CD8-positive, alpha-beta T cell (primary cell): ENCODE measurements at regions of chr15 and their contacts with region 1.

Region 1: GRCh38 chr15:33700695-33701304 is 267.5 kb upstream of the CHRM5 start:
- DNase-seq: peak; percentile 20 to 69 (median 53)
- ATAC-seq: peak; percentile 52
- H3K4me3 ChIP-seq: no peak overlapping the region
- H3K4me3 Mint-ChIP-seq: no peak overlapping the region
- H3K27ac ChIP-seq: no peak overlapping the region
- H3K27ac Mint-ChIP-seq: no peak overlapping the region
- H3K4me1 ChIP-seq: no peaks in the 10 kb centered on the region
- H3K4me1 Mint-ChIP-seq: no peaks in the 10 kb centered on the region
- H3K27me3 ChIP-seq: peaks cover 0 to 2% of the 10 kb centered on the region in 2 experiments
- H3K27me3 Mint-ChIP-seq: peaks cover 9% of the 10 kb centered on the region
- CTCF ChIP-seq: peak; percentile 81

Region 2: GRCh38 chr15:32657198-32657883 is 1043.5 kb before region 1 on chr15:
- CTCF ChIA-PET with region 1: interaction called, 11 read pairs
- POLR2A ChIA-PET with region 1: no interaction called
- intact Hi-C with region 1: loop called in 1 of 2 experiments (anchors 1 kb)
- DNase-seq: peak in 2 of 9 experiments; percentile 23 to 39
- ATAC-seq: peak; percentile 52
- H3K4me3 ChIP-seq: no peak overlapping the region
- H3K4me3 Mint-ChIP-seq: peak overlapping the region; percentile 17
- H3K27ac ChIP-seq: no peak overlapping the region
- H3K27ac Mint-ChIP-seq: no peak overlapping the region
- H3K4me1 ChIP-seq: no peaks in the 10 kb centered on the region
- H3K4me1 Mint-ChIP-seq: peaks cover 7% of the 10 kb centered on the region
- H3K27me3 ChIP-seq: no peaks in the 10 kb centered on the region
- H3K27me3 Mint-ChIP-seq: no peaks in the 10 kb centered on the region
- CTCF ChIP-seq: no peak

Region 3: GRCh38 chr15:33086507-33087121 is 614.2 kb before region 1 on chr15:
- CTCF ChIA-PET with region 1: interaction called, 4 read pairs
- POLR2A ChIA-PET with region 1: no interaction called
- intact Hi-C with region 1: loop called in 1 of 2 experiments (anchors 2 kb)
- DNase-seq: peak in 3 of 9 experiments; percentile 13 to 70 (median 58)
- ATAC-seq: no peak
- H3K4me3 ChIP-seq: no peak overlapping the region
- H3K4me3 Mint-ChIP-seq: no peak overlapping the region
- H3K27ac ChIP-seq: no peak overlapping the region
- H3K27ac Mint-ChIP-seq: no peak overlapping the region
- H3K4me1 ChIP-seq: peaks cover 5% of the 10 kb centered on the region
- H3K4me1 Mint-ChIP-seq: no peaks in the 10 kb centered on the region
- H3K27me3 ChIP-seq: no peaks in the 10 kb centered on the region
- H3K27me3 Mint-ChIP-seq: no peaks in the 10 kb centered on the region
- CTCF ChIP-seq: peak; percentile 23

Region 4: DNA sequence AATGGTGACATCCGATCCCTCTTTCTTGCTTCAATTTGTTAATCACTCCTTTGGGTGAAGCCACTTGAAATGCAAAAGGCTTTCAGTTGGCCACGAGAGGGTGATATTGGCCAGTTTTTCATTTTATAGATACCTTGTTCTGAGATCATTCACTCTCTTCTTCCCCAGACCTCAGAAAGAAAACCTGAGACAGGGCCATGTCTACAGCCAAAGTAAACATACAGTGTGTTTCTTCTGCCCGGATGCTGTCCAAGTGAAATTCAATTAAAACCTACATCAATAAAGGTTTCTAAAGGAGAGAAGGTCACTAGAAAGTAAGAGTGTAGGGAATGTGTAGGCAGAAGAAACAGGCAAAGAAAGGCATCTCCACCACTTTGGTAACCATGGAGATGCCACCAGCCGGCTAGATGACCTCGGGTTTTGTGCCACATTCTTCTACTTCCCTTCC is 466.8 kb before region 1 on chr15:
- CTCF ChIA-PET with region 1: interaction called, 5 read pairs
- POLR2A ChIA-PET with region 1: no interaction called
- intact Hi-C with region 1: loop called in 1 of 2 experiments (anchors 2 kb)
- DNase-seq: peak in 2 of 9 experiments; percentile 7 to 18
- ATAC-seq: no peak
- H3K4me3 ChIP-seq: no peak overlapping the region
- H3K4me3 Mint-ChIP-seq: no peak overlapping the region
- H3K27ac ChIP-seq: no peak overlapping the region
- H3K27ac Mint-ChIP-seq: no peak overlapping the region
- H3K4me1 ChIP-seq: no peaks in the 10 kb centered on the region
- H3K4me1 Mint-ChIP-seq: no peaks in the 10 kb centered on the region
- H3K27me3 ChIP-seq: no peaks in the 10 kb centered on the region
- H3K27me3 Mint-ChIP-seq: peaks cover 3% of the 10 kb centered on the region
- CTCF ChIP-seq: no peak

Region 5: DNA sequence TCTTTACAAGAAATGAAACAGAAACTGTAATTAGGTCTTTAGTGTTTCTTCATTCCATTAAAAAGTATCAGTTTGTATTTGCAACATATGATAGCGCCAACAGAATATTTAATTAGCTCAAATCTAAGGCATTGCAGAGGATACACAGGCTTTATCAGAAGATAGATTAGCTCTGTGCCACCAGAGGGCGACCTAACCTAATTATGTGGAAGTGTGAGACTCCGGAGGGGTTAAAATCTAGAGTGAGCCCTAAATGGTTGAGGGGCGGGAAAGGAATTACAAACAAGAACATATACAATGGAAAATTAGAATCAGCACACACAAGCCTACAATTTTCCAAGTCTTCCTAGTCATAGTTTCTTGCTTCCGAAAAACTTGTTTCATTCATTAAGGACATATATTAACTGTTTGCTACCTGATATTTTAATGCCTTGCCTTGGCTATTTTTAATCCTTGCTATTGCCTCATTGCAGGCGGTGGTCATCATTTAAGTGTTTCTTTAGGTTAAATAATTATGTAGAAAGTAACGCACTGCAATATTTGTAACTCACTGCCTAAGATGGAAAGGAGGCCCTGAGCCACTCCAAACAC is 408.0 kb before region 1 on chr15:
- CTCF ChIA-PET with region 1: interaction called, 11 read pairs
- POLR2A ChIA-PET with region 1: no interaction called
- intact Hi-C with region 1: loop called in 1 of 2 experiments (anchors 2 kb)
- DNase-seq: peak in 5 of 9 experiments; percentile 4 to 33 (median 20)
- ATAC-seq: no peak
- H3K4me3 ChIP-seq: no peak overlapping the region
- H3K4me3 Mint-ChIP-seq: no peak overlapping the region
- H3K27ac ChIP-seq: no peak overlapping the region
- H3K27ac Mint-ChIP-seq: no peak overlapping the region
- H3K4me1 ChIP-seq: no peaks in the 10 kb centered on the region
- H3K4me1 Mint-ChIP-seq: no peaks in the 10 kb centered on the region
- H3K27me3 ChIP-seq: no peaks in the 10 kb centered on the region
- H3K27me3 Mint-ChIP-seq: peaks cover 3% of the 10 kb centered on the region
- CTCF ChIP-seq: peak; percentile 24

Region 6: GRCh38 chr15:33716025-33716424 is 15.2 kb after region 1 on chr15:
- CTCF ChIA-PET with region 1: interaction called, 10 read pairs
- POLR2A ChIA-PET with region 1: no interaction called
- intact Hi-C with region 1: no loop called
- DNase-seq: no peak
- ATAC-seq: no peak
- H3K4me3 ChIP-seq: no peak overlapping the region
- H3K4me3 Mint-ChIP-seq: no peak overlapping the region
- H3K27ac ChIP-seq: no peak overlapping the region
- H3K27ac Mint-ChIP-seq: no peak overlapping the region
- H3K4me1 ChIP-seq: no peaks in the 10 kb centered on the region
- H3K4me1 Mint-ChIP-seq: no peaks in the 10 kb centered on the region
- H3K27me3 ChIP-seq: no peaks in the 10 kb centered on the region
- H3K27me3 Mint-ChIP-seq: peaks cover 2% of the 10 kb centered on the region
- CTCF ChIP-seq: no peak

Region 7: GRCh38 chr15:34342737-34343575 is 642.2 kb after region 1 on chr15 and contains the starts of genes NOP10 and NUTM1:
- CTCF ChIA-PET with region 1: no interaction called
- POLR2A ChIA-PET with region 1: no interaction called
- intact Hi-C with region 1: no loop called
- DNase-seq: peak; percentile 87 to 96 (median 93)
- ATAC-seq: peak; percentile 83
- H3K4me3 ChIP-seq: peak within 1 kb of the TSS; percentile 88 to 90
- H3K4me3 Mint-ChIP-seq: no peak within 1 kb of the TSS
- H3K27ac ChIP-seq: peak within 1 kb of the TSS; percentile 82 to 90
- H3K27ac Mint-ChIP-seq: peak within 1 kb of the TSS; percentile 85
- H3K4me1 ChIP-seq: peaks cover 20% of the 10 kb centered on the region
- H3K4me1 Mint-ChIP-seq: peaks cover 24% of the 10 kb centered on the region
- H3K27me3 ChIP-seq: no peaks in the 10 kb centered on the region
- H3K27me3 Mint-ChIP-seq: no peaks in the 10 kb centered on the region
- CTCF ChIP-seq: peak; percentile 90
- total RNA-seq, gene NOP10: 36.6 to 40.1 TPM
- total RNA-seq, gene NUTM1: not detected